Activated naive CD4-positive, alpha-beta T cell treated with anti-CD3 and anti-CD28 coated beads for 36 hours (primary cell): ENCODE measurements at regions of chr14 and their contacts with region 1.

Region 1: GRCh38 chr14:20613094-20614037 is 22.2 kb upstream of the RNASE12 start:
- DNase-seq: peak; percentile 92
- H3K4me3 Mint-ChIP-seq: no peak overlapping the region
- H3K27ac Mint-ChIP-seq: no peak overlapping the region
- H3K4me1 Mint-ChIP-seq: peaks cover 10% of the 10 kb centered on the region
- H3K27me3 Mint-ChIP-seq: no peaks in the 10 kb centered on the region

Region 2: DNA sequence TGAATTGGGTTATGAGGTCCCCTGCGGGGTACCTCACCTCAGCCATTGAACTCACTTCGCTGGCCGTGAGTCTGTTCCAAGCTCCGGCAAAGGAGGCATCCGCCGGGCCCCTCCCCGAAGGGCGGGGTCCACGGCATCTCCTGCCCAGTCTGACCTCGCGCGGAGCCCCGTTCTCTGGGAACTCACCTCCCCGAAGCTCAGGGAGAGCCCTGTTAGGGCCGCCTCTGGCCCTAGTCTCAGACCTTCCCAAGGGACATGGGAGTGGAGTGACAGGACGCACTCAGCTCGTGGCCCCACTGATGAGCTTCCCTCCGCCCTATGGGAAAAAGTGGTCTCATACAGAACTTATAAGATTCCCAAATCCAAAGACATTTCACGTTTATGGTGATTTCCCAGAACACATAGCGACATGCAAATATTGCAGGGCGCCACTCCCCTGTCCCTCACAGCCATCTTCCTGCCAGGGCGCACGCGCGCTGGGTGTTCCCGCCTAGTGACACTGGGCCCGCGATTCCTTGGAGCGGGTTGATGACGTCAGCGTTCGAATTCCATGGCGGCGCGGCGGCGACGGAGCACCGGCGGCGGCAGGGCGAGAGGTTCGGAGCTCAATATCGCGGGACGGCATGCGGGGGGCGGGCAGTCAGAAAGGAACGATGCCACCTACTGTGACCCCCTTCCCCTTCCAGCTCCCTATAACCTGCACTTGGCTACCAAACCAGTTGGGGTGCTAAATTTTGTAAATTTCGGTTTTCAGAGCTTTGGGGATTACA is 270.1 kb before region 1 on chr14 and contains the start of gene PARP2:
- CTCF ChIA-PET with region 1: interaction called, 28 read pairs
- intact Hi-C with region 1: loop called (anchors 1 kb)
- DNase-seq: peak; percentile 96
- H3K4me3 Mint-ChIP-seq: peak within 1 kb of the TSS; percentile 96
- H3K27ac Mint-ChIP-seq: peak within 1 kb of the TSS; percentile 95
- H3K4me1 Mint-ChIP-seq: peaks cover 19% of the 10 kb centered on the region
- H3K27me3 Mint-ChIP-seq: peaks cover 2% of the 10 kb centered on the region
- total RNA-seq, gene PARP2: 62.5 to 63.5 TPM

Region 3: DNA sequence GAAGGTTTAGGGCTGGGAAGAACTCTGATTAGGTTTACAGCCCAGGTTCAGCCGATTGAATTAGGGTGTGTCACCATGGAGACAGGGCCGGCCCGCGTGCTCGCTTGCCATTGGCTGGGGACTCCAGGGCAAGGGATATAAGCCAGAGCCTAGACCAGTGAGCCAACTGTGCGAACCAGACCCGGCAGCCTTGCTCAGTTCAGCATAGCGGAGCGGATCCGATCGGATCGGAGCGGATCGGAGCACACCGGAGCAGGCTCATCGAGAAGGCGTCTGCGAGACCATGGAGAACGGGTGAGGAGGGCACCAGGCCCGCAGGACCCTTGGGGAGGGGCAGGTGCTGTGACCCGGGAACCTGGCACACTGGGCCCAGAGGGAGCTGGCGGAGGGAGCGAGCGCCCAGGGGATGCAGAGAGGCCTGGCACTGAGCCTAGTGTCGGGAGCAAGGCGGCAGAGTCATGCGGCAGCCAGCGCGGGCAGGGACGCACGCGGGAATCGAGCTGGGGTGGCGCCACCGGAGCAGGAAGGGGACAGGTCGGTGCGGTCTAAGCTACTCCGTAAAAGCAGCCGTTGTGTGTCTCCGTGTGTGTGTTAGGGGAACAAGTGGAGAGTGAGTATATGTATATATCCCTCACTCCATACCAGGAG is 144.0 kb before region 1 on chr14 and contains the start of gene PNP:
- CTCF ChIA-PET with region 1: no interaction called
- intact Hi-C with region 1: loop called (anchors 1 kb)
- DNase-seq: peak; percentile 91
- H3K4me3 Mint-ChIP-seq: peak within 1 kb of the TSS; percentile 88
- H3K27ac Mint-ChIP-seq: peak within 1 kb of the TSS; percentile 97
- H3K4me1 Mint-ChIP-seq: peaks cover 36% of the 10 kb centered on the region
- H3K27me3 Mint-ChIP-seq: no peaks in the 10 kb centered on the region
- total RNA-seq, gene PNP: 187 to 191 TPM

Region 4: DNA sequence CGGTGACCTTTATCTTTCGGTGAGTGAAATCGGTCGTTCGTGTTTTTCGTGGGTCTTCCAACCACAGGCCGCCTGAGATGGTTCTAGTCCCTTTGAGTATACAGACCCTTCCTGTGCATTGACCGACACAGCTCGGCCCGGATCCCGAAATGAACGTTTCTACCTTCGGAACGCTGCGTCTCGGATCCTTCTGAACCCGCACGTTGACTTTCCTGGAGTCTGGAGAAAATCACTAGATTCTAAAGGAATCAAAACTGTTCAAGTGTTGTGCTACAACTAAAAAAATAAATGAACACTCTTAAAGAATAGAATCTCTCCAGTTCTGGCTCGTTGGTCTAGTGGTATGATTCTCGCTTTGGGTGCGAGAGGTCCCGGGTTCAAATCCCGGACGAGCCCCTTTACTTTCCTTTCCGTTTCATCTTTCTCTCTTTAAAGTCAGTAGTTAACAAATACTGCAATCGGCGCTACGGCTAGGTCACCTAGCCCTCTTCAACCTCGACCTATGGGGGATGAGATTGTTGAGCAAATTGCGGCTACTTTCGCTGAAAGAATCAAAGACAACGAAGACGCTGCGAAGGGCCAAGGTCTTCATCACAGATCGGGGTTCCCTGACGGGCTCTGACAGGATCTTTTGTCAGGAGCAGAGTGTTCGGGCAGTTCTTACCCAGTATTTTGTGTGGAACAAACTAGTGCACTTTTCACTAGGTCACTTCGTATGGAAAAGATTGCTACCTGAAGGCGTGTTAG is 19.5 kb after region 1 on chr14:
- CTCF ChIA-PET with region 1: interaction called, 23 read pairs
- intact Hi-C with region 1: loop called (anchors 1 kb)
- DNase-seq: peak; percentile 83
- H3K4me3 Mint-ChIP-seq: peak overlapping the region; percentile 79
- H3K27ac Mint-ChIP-seq: peak overlapping the region; percentile 89
- H3K4me1 Mint-ChIP-seq: peaks cover 35% of the 10 kb centered on the region
- H3K27me3 Mint-ChIP-seq: peaks cover 34% of the 10 kb centered on the region

Region 5: GRCh38 chr14:20690848-20691523 is 77.6 kb after region 1 on chr14:
- CTCF ChIA-PET with region 1: interaction called, 46 read pairs
- intact Hi-C with region 1: loop called (anchors 1 kb)
- DNase-seq: peak; percentile 60
- H3K4me3 Mint-ChIP-seq: no peak overlapping the region
- H3K27ac Mint-ChIP-seq: no peak overlapping the region
- H3K4me1 Mint-ChIP-seq: peaks cover 3% of the 10 kb centered on the region
- H3K27me3 Mint-ChIP-seq: no peaks in the 10 kb centered on the region

Region 6: DNA sequence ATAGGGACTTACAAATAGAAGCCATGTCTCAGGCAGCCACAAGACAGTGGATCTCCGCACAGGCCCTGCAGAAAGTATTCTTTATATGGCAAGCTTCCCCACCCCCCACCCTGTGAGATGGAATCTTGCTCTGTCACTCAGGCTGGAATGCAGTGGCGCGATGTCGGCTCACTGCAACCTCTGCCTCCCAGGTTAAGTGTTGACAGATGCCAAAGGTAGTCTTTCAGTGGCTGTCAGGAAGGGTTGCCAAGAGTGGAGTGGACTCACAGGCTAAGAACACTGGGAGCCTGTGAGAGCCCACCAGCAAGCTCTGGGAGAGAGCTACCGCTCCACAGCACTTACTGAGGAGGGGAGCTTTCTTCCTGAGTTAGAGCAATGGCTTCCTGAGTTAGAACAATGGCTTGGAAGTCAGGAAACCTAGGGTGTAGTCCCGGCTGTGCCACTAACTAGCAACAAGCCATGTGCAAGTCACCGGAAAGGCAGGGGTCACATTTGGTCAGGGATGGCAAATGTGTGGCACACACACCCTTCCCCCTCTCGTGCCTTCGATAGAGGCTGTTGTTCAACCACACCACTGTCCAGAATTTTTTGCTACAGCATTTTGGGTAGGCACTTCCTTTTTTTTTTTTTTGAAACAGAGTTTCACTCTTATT is 186.7 kb after region 1 on chr14:
- CTCF ChIA-PET with region 1: no interaction called
- intact Hi-C with region 1: no loop called
- DNase-seq: no peak
- H3K4me3 Mint-ChIP-seq: no peak overlapping the region
- H3K27ac Mint-ChIP-seq: no peak overlapping the region
- H3K4me1 Mint-ChIP-seq: peaks cover 3% of the 10 kb centered on the region
- H3K27me3 Mint-ChIP-seq: no peaks in the 10 kb centered on the region

Region 7: DNA sequence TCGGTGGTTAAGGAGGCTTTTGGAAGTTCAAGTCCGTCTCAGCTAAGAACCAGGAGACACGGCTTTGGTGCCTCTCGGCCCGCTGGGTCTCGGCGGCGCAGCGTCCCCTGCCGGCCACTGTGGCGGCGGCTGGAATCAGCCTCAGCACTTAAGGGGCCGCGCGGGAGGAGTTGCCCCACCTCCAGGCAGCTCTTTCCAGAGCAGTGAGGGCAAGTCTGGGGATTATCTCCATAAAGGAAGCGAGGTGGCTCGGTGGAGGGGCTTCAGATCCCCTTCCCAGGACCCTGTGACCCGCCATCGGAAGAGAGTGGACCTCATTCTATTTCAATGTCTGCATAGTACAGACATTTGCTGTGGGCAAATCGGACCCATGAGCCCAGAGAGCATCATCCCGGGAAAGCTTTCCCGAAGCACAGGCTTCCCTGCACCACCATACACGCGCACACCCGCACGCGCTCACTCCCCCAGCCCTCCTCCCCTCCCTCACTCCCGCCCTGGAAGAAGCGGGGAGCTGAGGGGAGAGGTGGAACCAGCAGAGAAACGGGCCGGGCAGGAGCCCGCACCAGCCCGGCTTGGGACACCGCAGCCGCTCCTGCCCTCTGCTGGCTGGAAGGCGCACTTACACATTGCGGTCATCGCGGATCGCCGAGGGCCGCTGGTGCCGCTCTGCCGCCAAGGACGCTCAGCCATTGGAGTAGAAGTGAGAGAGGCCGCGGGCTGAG is 357.8 kb after region 1 on chr14:
- CTCF ChIA-PET with region 1: interaction called, 5 read pairs
- intact Hi-C with region 1: loop called (anchors 1 kb)
- DNase-seq: peak; percentile 82
- H3K4me3 Mint-ChIP-seq: peak overlapping the region; percentile 83
- H3K27ac Mint-ChIP-seq: no peak overlapping the region
- H3K4me1 Mint-ChIP-seq: peaks cover 6% of the 10 kb centered on the region
- H3K27me3 Mint-ChIP-seq: peaks cover 17% of the 10 kb centered on the region